ENCODE measurements at regions of chr12 and their contacts with region 1.

Region 1: GRCh38 chr12:104877123-104877705 is 80.9 kb downstream of the SLC41A2 start:
- DNase-seq: peak; percentile 23 to 51
- ATAC-seq: peak in 6 of 8 donors; percentile 57 to 78 (median 70)
- H3K4me3 ChIP-seq: no peak overlapping the region
- H3K27ac ChIP-seq: no peak overlapping the region
- H3K4me1 ChIP-seq: peaks cover 0 to 5% (median 0%) of the 10 kb centered on the region in 9 donors
- H3K27me3 ChIP-seq: no peaks in the 10 kb centered on the region
- CTCF ChIP-seq: peak; percentile 48 to 86 (median 74)

Region 2: GRCh38 chr12:104201238-104202001 is 675.8 kb before region 1 on chr12:
- intact Hi-C with region 1: loop called in 4 of 10 experiments (anchors 10 kb)
- DNase-seq: peak in 1 of 2 donors; percentile 47
- ATAC-seq: peak; percentile 59 to 87 (median 76)
- H3K4me3 ChIP-seq: no peak overlapping the region
- H3K27ac ChIP-seq: no peak overlapping the region
- H3K4me1 ChIP-seq: no peaks in the 10 kb centered on the region
- H3K27me3 ChIP-seq: no peaks in the 10 kb centered on the region
- CTCF ChIP-seq: peak; percentile 60 to 89 (median 85)

Region 3: GRCh38 chr12:104456417-104456949 is 420.7 kb before region 1 on chr12 and contains the start of gene CHST11:
- intact Hi-C with region 1: loop called in 2 of 10 experiments (anchors 5 to 10 kb)
- DNase-seq: peak; percentile 87
- ATAC-seq: peak; percentile 93 to 96 (median 94)
- H3K4me3 ChIP-seq: peak within 1 kb of the TSS; percentile 49 to 99 (median 93)
- H3K27ac ChIP-seq: peak within 1 kb of the TSS in 9 of 10 donors; percentile 59 to 95 (median 82)
- H3K4me1 ChIP-seq: peaks cover 0 to 36% (median 30%) of the 10 kb centered on the region in 9 donors
- H3K27me3 ChIP-seq: no peaks in the 10 kb centered on the region
- CTCF ChIP-seq: peak in 5 of 9 donors; percentile 21 to 61 (median 47)
- total RNA-seq, gene CHST11: 2.7 to 12.7 (median 4.5) TPM

Region 4: DNA sequence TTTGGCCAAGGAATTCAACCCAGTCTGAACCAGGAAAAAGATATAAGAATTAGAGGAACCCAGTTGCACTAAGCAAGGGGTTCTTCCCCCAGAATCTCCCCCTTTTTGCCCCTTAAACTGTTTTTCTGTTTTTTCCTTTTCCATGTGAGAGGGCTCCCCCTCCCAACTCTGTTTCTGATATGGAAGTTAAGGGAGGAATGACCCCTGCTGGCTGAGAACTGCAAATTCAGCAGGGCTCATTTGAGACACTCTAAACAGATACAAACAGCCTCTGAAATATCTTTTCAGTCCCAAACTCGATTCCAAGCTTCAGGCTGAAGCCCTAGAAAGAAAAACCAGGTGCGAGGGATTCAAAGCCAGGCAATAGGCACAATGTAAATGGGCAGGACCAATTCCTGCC is 51.8 kb before region 1 on chr12:
- intact Hi-C with region 1: no loop called
- DNase-seq: no peak
- ATAC-seq: no peak
- H3K4me3 ChIP-seq: no peak overlapping the region
- H3K27ac ChIP-seq: no peak overlapping the region
- H3K4me1 ChIP-seq: no peaks in the 10 kb centered on the region
- H3K27me3 ChIP-seq: no peaks in the 10 kb centered on the region
- CTCF ChIP-seq: peak in 3 of 9 donors; percentile 6 to 25 (median 12)

Region 5: GRCh38 chr12:105030820-105031807 is 153.9 kb after region 1 on chr12:
- intact Hi-C with region 1: no loop called
- DNase-seq: no peak
- ATAC-seq: no peak
- H3K4me3 ChIP-seq: no peak overlapping the region
- H3K27ac ChIP-seq: peak overlapping the region in 1 of 10 donors; percentile 56
- H3K4me1 ChIP-seq: peaks cover 0 to 10% (median 4%) of the 10 kb centered on the region in 9 donors
- H3K27me3 ChIP-seq: no peaks in the 10 kb centered on the region
- CTCF ChIP-seq: no peak

Region 6: DNA sequence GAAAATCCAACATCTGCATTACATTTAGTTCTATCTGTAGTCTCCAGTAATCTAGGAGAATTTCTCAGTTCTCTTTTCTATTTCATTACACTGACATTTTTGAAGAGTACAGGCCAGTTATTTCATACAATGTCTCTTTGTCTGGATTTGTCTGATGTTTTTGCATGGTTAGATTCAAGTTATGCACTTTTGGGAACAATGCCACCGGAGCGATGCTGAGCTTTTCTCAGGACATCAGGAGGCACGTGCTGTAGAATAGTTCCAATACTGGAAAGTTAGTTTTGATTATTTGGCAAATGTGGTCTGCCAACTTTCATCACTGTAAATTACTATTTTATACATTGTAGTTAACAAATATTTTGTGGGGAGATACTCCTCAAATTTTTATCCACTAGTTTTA is 164.0 kb after region 1 on chr12:
- intact Hi-C with region 1: loop called in 1 of 10 experiments (anchors 10 kb)
- DNase-seq: no peak
- ATAC-seq: no peak
- H3K4me3 ChIP-seq: no peak overlapping the region
- H3K27ac ChIP-seq: no peak overlapping the region
- H3K4me1 ChIP-seq: peaks cover 0 to 5% (median 0%) of the 10 kb centered on the region in 9 donors
- H3K27me3 ChIP-seq: no peaks in the 10 kb centered on the region
- CTCF ChIP-seq: no peak